PC-9 (cell line): ENCODE measurements at regions of chr9 and their contacts with region 1.

Region 1: GRCh38 chr9:134698587-134699342 is 57.2 kb downstream of the COL5A1 start:
- DNase-seq: peak in 1 of 2 experiments; percentile 69
- H3K4me3 ChIP-seq: no peak overlapping the region
- H3K27ac ChIP-seq: no peak overlapping the region
- H3K4me1 ChIP-seq: no peaks in the 10 kb centered on the region
- H3K27me3 ChIP-seq: peaks cover 56% of the 10 kb centered on the region
- CTCF ChIP-seq: peak; percentile 83

Region 2: GRCh38 chr9:134320126-134320867 is 378.5 kb before region 1 on chr9:
- CTCF ChIA-PET with region 1: no interaction called
- POLR2A ChIA-PET with region 1: interaction called, 25 read pairs
- intact Hi-C with region 1: no loop called
- DNase-seq: no peak
- H3K4me3 ChIP-seq: no peak overlapping the region
- H3K27ac ChIP-seq: no peak overlapping the region
- H3K4me1 ChIP-seq: peaks cover 8% of the 10 kb centered on the region
- H3K27me3 ChIP-seq: no peaks in the 10 kb centered on the region
- CTCF ChIP-seq: no peak

Region 3: DNA sequence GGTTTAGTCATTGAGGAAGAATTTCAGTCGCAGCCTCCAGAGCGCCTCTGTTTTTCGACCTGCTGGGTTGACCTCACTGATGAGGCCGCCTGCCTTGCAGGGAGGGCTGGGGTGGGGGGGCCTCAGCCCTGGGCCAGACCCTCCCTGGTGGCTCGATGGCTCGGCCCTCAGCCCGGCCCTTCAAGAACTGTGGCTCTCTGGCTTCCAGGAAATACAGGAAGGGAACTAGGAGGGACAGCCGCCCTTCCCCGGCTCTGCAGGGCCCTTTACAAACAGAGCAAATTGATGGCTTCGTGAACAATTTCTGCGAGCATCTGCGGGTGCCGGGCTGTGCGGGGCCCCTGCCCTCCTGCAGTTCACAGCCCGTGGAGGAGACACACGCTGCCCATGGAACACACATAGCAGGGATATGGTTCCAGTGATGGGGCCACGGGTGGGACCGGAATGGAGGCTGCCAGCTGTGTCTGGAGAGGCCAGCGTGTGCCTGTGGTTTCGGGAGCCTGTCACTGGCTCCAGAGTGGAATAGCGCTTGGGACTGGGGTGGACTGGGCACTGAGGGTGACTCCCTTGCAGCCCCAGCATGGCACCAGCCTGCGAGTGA is 17.6 kb before region 1 on chr9:
- CTCF ChIA-PET with region 1: no interaction called
- POLR2A ChIA-PET with region 1: no interaction called
- intact Hi-C with region 1: no loop called
- DNase-seq: no peak
- H3K4me3 ChIP-seq: no peak overlapping the region
- H3K27ac ChIP-seq: no peak overlapping the region
- H3K4me1 ChIP-seq: no peaks in the 10 kb centered on the region
- H3K27me3 ChIP-seq: peaks cover 59% of the 10 kb centered on the region
- CTCF ChIP-seq: no peak

Region 4: DNA sequence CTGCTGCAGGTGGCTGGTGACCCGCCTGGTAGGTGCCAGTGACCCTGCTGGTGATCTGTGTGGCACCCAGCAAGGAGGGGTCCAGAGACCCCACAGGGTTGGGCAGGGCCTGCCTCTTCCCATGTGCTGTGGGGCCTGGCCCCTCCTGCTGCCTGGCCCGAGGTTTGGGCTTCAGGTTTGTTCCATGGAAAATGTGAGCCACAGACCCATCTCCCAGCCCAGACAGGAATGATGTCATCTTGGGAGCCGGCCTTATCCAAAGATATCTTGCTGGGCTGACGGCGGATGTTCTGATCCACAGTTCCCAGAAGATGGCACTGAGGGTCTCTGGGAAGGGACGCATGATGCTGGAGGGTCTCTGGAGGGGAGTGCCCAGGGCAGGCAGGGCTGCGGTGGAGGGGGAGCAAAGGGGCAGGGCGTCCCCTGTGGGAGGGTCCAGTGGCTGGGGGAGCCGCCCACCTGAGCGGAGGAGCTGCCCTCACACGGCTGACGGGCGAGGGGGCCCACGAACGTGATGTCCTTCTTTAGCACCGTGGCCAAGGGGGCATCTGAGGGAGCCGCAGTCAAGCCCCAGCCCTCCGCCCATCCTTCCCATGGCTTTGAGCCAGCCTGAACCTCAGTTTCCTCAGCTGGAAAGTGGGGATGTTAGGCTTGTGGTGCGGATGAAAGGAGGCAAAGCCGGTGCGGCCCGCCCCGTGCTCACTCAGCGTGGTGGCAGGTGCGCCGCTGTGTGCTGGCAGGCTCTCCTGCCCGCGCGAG is 10.9 kb after region 1 on chr9:
- CTCF ChIA-PET with region 1: no interaction called
- POLR2A ChIA-PET with region 1: no interaction called
- intact Hi-C with region 1: no loop called
- DNase-seq: no peak
- H3K4me3 ChIP-seq: no peak overlapping the region
- H3K27ac ChIP-seq: no peak overlapping the region
- H3K4me1 ChIP-seq: no peaks in the 10 kb centered on the region
- H3K27me3 ChIP-seq: peaks cover 42% of the 10 kb centered on the region
- CTCF ChIP-seq: no peak

Region 5: GRCh38 chr9:134738869-134739659 is 40.3 kb after region 1 on chr9:
- CTCF ChIA-PET with region 1: no interaction called
- POLR2A ChIA-PET with region 1: no interaction called
- intact Hi-C with region 1: loop called (anchors 1 kb)
- DNase-seq: peak in 1 of 2 experiments; percentile 70
- H3K4me3 ChIP-seq: no peak overlapping the region
- H3K27ac ChIP-seq: no peak overlapping the region
- H3K4me1 ChIP-seq: no peaks in the 10 kb centered on the region
- H3K27me3 ChIP-seq: peaks cover 72% of the 10 kb centered on the region
- CTCF ChIP-seq: peak; percentile 87

Region 6: GRCh38 chr9:135343837-135344522 is 645.2 kb after region 1 on chr9:
- CTCF ChIA-PET with region 1: interaction called, 11 read pairs
- POLR2A ChIA-PET with region 1: no interaction called
- intact Hi-C with region 1: no loop called
- DNase-seq: peak in 1 of 2 experiments; percentile 50
- H3K4me3 ChIP-seq: no peak overlapping the region
- H3K27ac ChIP-seq: no peak overlapping the region
- H3K4me1 ChIP-seq: no peaks in the 10 kb centered on the region
- H3K27me3 ChIP-seq: peaks cover 100% of the 10 kb centered on the region
- CTCF ChIP-seq: peak; percentile 90